ENCODE measurements at regions of chr9 and their contacts with region 1.

Region 1: DNA sequence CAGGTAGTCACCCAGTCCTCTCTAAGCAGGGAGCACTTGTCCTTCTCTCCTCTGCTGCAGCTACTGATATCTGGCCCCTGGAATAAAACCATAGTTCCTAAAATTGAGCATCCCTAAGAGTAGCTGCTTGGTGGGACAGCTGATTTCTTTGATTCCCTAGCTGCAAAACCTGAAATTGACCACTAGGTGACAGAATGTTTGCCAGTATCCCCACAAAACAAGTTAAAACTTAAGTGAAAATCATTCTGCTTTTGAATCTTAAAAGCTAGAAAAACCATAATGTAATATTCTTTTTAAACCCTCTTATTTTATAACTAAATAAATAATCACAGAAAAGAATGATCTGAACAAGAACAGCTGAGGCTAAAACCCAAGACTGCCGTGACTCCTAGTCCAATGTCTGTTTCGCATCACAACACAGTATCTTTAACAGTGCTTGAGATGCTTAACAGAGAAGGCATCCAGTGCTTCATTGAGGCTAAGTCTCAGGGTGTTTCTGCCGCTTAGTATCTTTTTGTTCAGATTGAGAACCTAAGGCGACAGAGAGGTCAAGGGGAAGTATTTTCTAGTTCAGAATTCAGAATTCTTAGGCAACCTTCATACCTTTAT is 24.4 kb upstream of the TAL2 start:
- DNase-seq: no peak
- ATAC-seq: peak; percentile 43; the same call in 2 of the 3 replicates
- H3K4me3 ChIP-seq: no peak overlapping the region
- H3K27ac ChIP-seq: no peak overlapping the region
- H3K4me1 ChIP-seq: peaks cover 4% of the 10 kb centered on the region; the same call in 1 of the 2 replicates
- H3K27me3 ChIP-seq: no peaks in the 10 kb centered on the region
- CTCF ChIP-seq: peak; percentile 43 to 62 (median 54)
- EP300 ChIP-seq: no peak
- POLR2A ChIP-seq: no peak
- RAD21 ChIP-seq: peak; percentile 46; the same call in 1 of the 2 replicates

Region 2: DNA sequence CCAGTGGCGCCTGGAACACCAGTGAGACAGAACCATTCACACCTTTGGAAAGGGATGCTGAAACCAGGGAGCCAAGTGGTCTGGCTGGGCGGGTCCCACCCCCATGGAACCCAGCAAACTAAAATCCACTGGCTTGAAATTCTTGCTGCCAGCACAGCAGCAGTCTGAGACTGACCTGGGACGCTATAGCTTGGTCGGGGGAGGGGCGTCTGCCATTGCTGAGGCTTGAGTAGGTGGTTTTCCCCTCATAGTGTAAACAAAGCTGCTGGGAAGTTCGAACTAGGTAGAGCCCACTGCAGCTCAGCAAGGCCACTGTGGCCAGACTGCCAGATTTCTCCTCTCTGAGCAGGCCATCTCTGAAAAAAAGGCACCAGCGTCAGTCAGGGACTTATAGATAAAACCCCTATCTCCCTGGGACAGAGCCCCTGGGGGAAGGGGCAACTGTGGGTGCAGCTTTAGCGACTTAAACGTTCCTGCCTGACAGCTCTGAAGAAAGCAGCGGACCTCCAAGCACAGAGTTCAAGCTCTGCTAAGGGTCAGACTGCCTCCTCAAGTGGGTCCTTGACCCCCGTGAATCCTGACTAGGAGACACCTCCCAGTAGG is 122.0 kb before region 1 on chr9:
- CTCF ChIA-PET with region 1: no interaction called
- POLR2A ChIA-PET with region 1: no interaction called
- RAD21 ChIA-PET with region 1: no interaction called
- SMC1A ChIA-PET with region 1: no interaction called
- in situ Hi-C with region 1: no loop called
- intact Hi-C with region 1: no loop called
- DNase-seq: no peak
- ATAC-seq: no peak
- H3K4me3 ChIP-seq: no peak overlapping the region
- H3K27ac ChIP-seq: no peak overlapping the region
- H3K4me1 ChIP-seq: no peaks in the 10 kb centered on the region
- H3K27me3 ChIP-seq: no peaks in the 10 kb centered on the region
- CTCF ChIP-seq: no peak
- EP300 ChIP-seq: no peak
- POLR2A ChIP-seq: no peak
- RAD21 ChIP-seq: no peak

Region 3: GRCh38 chr9:105621001-105621400 is 16.9 kb before region 1 on chr9:
- CTCF ChIA-PET with region 1: interaction called, 12 read pairs
- POLR2A ChIA-PET with region 1: no interaction called
- RAD21 ChIA-PET with region 1: interaction called, 4 read pairs
- SMC1A ChIA-PET with region 1: interaction called, 4 read pairs
- in situ Hi-C with region 1: no loop called
- intact Hi-C with region 1: no loop called
- DNase-seq: no peak
- ATAC-seq: no peak
- H3K4me3 ChIP-seq: no peak overlapping the region
- H3K27ac ChIP-seq: no peak overlapping the region
- H3K4me1 ChIP-seq: no peaks in the 10 kb centered on the region
- H3K27me3 ChIP-seq: no peaks in the 10 kb centered on the region
- CTCF ChIP-seq: no peak
- EP300 ChIP-seq: no peak
- POLR2A ChIP-seq: no peak
- RAD21 ChIP-seq: no peak

Region 4: GRCh38 chr9:105708405-105708804 is 70.5 kb after region 1 on chr9:
- CTCF ChIA-PET with region 1: interaction called, 25 read pairs
- POLR2A ChIA-PET with region 1: no interaction called
- RAD21 ChIA-PET with region 1: interaction called, 4 read pairs
- SMC1A ChIA-PET with region 1: interaction called, 5 read pairs
- in situ Hi-C with region 1: no loop called
- intact Hi-C with region 1: no loop called
- DNase-seq: no peak
- ATAC-seq: peak; percentile 65
- H3K4me3 ChIP-seq: peak overlapping the region; percentile 54; the same call in 1 of the 2 replicates
- H3K27ac ChIP-seq: peak overlapping the region; percentile 52
- H3K4me1 ChIP-seq: no peaks in the 10 kb centered on the region
- H3K27me3 ChIP-seq: no peaks in the 10 kb centered on the region
- CTCF ChIP-seq: no peak
- EP300 ChIP-seq: no peak
- POLR2A ChIP-seq: no peak
- RAD21 ChIP-seq: no peak

Region 5: DNA sequence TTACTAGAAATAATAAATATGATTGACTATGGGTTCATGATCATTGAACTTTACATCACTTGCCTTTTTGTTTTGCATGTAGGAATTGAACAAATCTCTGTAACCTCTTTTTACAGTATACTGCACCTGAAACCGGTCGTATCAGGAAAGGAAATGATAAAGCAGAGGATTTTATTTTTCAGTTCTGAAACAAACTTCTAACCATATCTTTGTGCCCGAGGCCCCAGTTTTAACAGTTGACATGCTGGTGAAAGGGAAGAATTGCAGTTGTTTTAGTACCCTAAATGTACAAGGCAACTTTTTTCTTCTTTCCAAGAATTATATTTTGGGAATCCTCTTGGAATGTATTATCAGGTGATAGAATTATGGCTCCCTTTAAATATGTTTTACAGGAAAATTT is 84.2 kb after region 1 on chr9:
- CTCF ChIA-PET with region 1: interaction called, 96 read pairs
- POLR2A ChIA-PET with region 1: interaction called, 3 read pairs
- RAD21 ChIA-PET with region 1: interaction called, 33 read pairs
- SMC1A ChIA-PET with region 1: interaction called, 19 read pairs
- in situ Hi-C with region 1: no loop called
- intact Hi-C with region 1: no loop called
- DNase-seq: no peak
- ATAC-seq: no peak
- H3K4me3 ChIP-seq: no peak overlapping the region
- H3K27ac ChIP-seq: no peak overlapping the region
- H3K4me1 ChIP-seq: no peaks in the 10 kb centered on the region
- H3K27me3 ChIP-seq: no peaks in the 10 kb centered on the region
- CTCF ChIP-seq: no peak
- EP300 ChIP-seq: no peak
- POLR2A ChIP-seq: no peak
- RAD21 ChIP-seq: no peak